PC-3 (cell line): ENCODE measurements at regions of chr3 and their contacts with region 1.

Region 1: GRCh38 chr3:188421836-188422540 is 268.0 kb downstream of the LPP start:
- DNase-seq: no peak
- ATAC-seq: no peak
- H3K4me3 ChIP-seq: no peak overlapping the region
- H3K27ac ChIP-seq: peak overlapping the region; percentile 70; the same call in 1 of the 2 replicates
- H3K4me1 ChIP-seq: peaks cover 18% of the 10 kb centered on the region
- H3K27me3 ChIP-seq: no peaks in the 10 kb centered on the region
- CTCF ChIP-seq: no peak

Region 2: DNA sequence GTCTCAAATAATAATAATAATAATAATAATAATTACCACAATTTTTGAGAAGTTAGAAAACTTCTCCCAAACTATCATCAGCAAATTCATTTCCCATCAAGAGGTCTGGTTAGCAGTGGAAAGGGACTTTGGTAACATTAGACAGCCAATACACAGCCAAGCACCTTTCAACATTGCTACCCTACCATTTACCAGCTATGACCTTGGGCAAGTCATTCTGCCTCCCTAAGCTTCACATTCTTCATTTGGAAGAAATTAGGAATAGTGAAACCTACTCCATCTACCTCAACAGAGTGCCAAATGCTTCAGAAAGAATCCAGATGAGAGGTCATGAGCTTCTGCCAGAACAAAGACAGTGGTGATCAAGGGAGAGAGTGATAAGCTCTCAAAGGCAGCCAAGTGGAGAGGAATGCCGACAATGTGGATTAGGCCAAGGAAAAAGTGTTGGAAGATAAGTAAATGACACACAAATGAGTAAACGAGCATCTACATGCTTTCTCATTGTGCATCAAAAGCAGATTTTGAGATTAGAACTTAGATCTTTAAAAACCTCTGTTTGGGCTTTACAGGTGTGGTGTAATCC is 310.9 kb before region 1 on chr3:
- CTCF ChIA-PET with region 1: no interaction called
- POLR2A ChIA-PET with region 1: no interaction called
- intact Hi-C with region 1: no loop called
- DNase-seq: no peak
- ATAC-seq: no peak
- H3K4me3 ChIP-seq: no peak overlapping the region
- H3K27ac ChIP-seq: no peak overlapping the region
- H3K4me1 ChIP-seq: no peaks in the 10 kb centered on the region
- H3K27me3 ChIP-seq: no peaks in the 10 kb centered on the region
- CTCF ChIP-seq: no peak

Region 3: DNA sequence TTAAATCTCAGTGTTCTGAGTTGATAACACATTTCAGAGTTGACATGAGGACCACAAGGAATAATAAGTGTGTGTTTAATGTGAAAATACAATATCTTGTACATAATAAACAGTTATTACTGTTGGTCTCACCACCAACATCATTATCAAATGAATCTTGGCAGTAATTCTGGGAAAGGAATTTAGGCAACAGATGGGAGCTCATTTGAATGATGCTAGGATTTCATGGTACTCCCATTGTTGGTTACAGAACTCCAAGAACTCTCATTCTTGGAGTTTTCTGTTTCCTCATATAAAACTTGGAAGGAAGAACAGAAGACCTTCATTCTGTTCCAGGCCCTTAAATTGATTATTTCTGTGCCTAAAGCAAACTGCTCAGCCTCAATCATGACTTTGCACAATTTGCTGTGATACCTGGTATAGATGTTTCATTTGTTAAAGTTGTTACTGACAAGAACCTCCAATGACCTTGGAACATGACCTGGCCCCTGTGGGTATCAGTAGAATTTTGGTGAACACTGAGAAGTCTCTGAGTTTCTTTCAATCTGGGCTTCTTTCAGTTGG is 117.7 kb after region 1 on chr3:
- CTCF ChIA-PET with region 1: no interaction called
- POLR2A ChIA-PET with region 1: no interaction called
- intact Hi-C with region 1: loop called (anchors 5 kb)
- DNase-seq: no peak
- ATAC-seq: no peak
- H3K4me3 ChIP-seq: no peak overlapping the region
- H3K27ac ChIP-seq: no peak overlapping the region
- H3K4me1 ChIP-seq: peaks cover 27% of the 10 kb centered on the region
- H3K27me3 ChIP-seq: no peaks in the 10 kb centered on the region
- CTCF ChIP-seq: no peak